Common myeloid progenitor, CD34-positive (primary cell): ENCODE measurements at regions of chr11 and their contacts with region 1.

Region 1: GRCh38 chr11:36564376-36565030 is 3.3 kb upstream of the RAG1 start:
- DNase-seq: peak; percentile 69 to 83 (median 78)
- H3K4me3 ChIP-seq: peak overlapping the region in 6 of 7 experiments; percentile 40 to 76 (median 56)
- H3K27ac ChIP-seq: no peak overlapping the region
- H3K4me1 ChIP-seq: peaks cover 0 to 11% (median 7%) of the 10 kb centered on the region in 4 experiments
- H3K27me3 ChIP-seq: no peaks in the 10 kb centered on the region

Region 2: GRCh38 chr11:36041988-36042611 is 522.4 kb before region 1 on chr11:
- CTCF ChIA-PET with region 1: no interaction called
- POLR2A ChIA-PET with region 1: no interaction called
- DNase-seq: peak; percentile 29 to 74 (median 65)
- H3K4me3 ChIP-seq: no peak overlapping the region
- H3K27ac ChIP-seq: no peak overlapping the region
- H3K4me1 ChIP-seq: peaks cover 0 to 18% (median 9%) of the 10 kb centered on the region in 4 experiments
- H3K27me3 ChIP-seq: peaks cover 0 to 2% (median 0%) of the 10 kb centered on the region in 5 experiments

Region 3: GRCh38 chr11:36577859-36578258 is 13.4 kb after region 1 on chr11:
- CTCF ChIA-PET with region 1: interaction called, 50 read pairs
- POLR2A ChIA-PET with region 1: no interaction called
- DNase-seq: no peak
- H3K4me3 ChIP-seq: no peak overlapping the region
- H3K27ac ChIP-seq: no peak overlapping the region
- H3K4me1 ChIP-seq: no peaks in the 10 kb centered on the region
- H3K27me3 ChIP-seq: no peaks in the 10 kb centered on the region

Region 4: GRCh38 chr11:36586543-36586942 is 22.0 kb after region 1 on chr11:
- CTCF ChIA-PET with region 1: interaction called, 12 read pairs
- POLR2A ChIA-PET with region 1: no interaction called
- DNase-seq: peak; percentile 31 to 81 (median 74)
- H3K4me3 ChIP-seq: no peak overlapping the region
- H3K27ac ChIP-seq: no peak overlapping the region
- H3K4me1 ChIP-seq: no peaks in the 10 kb centered on the region
- H3K27me3 ChIP-seq: peaks cover 0 to 15% (median 3%) of the 10 kb centered on the region in 5 experiments

Region 5: DNA sequence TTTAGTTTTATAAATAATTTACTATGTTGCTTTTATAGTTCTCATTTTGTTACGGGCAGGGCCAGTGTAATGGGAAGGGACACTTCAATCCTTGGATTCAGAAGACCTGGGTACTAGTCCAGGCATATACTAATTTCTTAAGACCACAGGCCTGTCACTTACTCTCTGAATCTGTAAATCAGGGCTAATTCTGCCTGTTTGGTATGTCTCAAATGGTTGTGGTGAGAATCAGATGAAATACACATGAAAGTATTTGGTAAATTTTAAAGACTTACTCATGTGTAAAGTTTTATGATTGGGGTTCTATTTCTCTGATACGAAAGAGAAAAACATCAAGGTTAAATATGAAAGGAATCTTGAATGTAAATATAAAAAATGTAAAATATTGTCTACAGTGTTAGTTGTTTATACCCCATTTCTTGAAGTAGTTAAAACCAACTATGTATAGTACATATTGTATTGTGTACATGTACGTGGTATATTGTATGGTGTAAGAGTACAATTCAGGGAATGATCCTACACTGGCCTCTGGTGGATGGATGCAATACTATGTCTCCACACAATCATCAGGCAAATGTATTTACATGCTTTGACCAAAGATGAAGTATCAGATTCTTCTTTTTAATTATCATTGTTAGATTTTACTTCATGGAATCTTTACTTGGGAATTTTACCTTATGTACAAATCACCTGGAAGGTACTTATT is 58.1 kb after region 1 on chr11:
- CTCF ChIA-PET with region 1: interaction called, 89 read pairs
- POLR2A ChIA-PET with region 1: interaction called, 3 read pairs
- DNase-seq: peak; percentile 71 to 86 (median 82)
- H3K4me3 ChIP-seq: no peak overlapping the region
- H3K27ac ChIP-seq: no peak overlapping the region
- H3K4me1 ChIP-seq: peaks cover 9 to 32% (median 17%) of the 10 kb centered on the region in 4 experiments
- H3K27me3 ChIP-seq: no peaks in the 10 kb centered on the region

Region 6: GRCh38 chr11:36628765-36629244 is 64.3 kb after region 1 on chr11:
- CTCF ChIA-PET with region 1: interaction called, 89 read pairs
- POLR2A ChIA-PET with region 1: no interaction called
- DNase-seq: no peak
- H3K4me3 ChIP-seq: no peak overlapping the region
- H3K27ac ChIP-seq: no peak overlapping the region
- H3K4me1 ChIP-seq: peaks cover 0 to 7% (median 0%) of the 10 kb centered on the region in 4 experiments
- H3K27me3 ChIP-seq: no peaks in the 10 kb centered on the region

Region 7: DNA sequence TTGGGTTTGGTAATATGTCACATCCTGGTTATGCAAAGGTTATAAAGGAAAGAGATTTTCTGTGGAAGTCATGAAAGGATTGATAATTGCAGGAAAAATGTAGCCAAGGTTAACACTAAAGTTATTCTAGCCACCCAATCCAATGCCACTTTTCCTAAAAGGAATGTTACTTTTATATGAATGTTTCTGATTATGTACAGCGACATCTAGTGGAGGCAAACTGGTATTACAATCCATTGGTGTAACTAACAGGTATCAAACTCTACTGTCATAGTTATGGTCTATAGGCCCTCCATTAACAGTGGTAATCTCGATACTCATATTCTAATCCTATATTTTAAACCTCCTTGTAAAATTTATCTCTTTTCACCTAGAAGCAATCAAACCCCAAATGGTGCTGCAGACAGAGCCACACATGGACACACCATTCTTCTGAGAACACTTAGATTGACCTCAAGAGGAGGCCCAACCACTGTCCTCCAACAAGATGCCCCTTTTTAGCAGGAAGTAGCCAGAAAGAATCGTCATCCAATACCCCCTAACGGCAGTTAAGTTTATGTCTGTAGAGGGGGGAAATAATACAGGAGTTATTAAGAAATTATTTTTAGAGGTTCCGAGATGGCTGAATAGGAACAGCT is 108.4 kb after region 1 on chr11:
- CTCF ChIA-PET with region 1: interaction called, 10 read pairs
- POLR2A ChIA-PET with region 1: no interaction called
- DNase-seq: peak; percentile 25 to 53 (median 51)
- H3K4me3 ChIP-seq: no peak overlapping the region
- H3K27ac ChIP-seq: no peak overlapping the region
- H3K4me1 ChIP-seq: no peaks in the 10 kb centered on the region
- H3K27me3 ChIP-seq: no peaks in the 10 kb centered on the region

Region 8: DNA sequence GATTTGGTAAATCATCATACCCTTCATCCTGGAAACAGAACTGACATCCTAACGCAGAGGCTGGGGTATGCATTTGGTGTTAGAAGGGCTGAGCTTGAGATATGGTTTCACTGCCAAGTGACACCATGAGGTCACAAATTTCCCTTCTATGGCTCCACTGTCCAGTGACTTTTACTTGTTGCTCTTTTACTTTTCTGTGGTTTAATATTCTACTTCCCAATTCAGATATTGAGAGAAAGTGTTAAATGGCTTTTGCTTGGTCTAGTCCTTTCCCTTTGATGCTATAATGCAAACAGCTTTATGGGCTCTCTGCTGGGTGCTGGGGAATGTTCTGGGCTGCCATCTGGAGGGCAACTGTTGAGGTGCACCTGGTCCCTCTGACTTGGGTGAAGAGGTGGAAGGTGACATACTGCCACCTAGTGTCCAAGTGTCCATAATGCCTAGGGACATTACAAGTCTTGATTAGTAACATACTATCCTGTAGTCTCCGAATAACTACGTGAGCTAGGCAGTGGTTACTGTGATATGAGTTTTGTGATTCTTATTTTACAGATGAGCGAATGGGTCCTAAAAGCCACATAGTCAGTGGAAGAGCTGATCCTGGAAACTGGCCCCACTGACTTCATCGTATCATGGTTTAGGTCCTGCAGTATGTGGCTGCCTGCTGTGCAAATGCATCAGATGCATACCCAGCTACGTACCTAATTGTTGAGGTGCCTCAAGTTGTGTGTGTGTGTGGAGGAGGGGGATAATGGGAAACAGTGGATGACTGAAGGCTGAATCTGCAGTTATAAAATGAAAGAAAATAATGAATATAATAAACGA is 182.6 kb after region 1 on chr11:
- CTCF ChIA-PET with region 1: interaction called, 59 read pairs
- POLR2A ChIA-PET with region 1: no interaction called
- DNase-seq: peak; percentile 93 to 97 (median 94)
- H3K4me3 ChIP-seq: no peak overlapping the region
- H3K27ac ChIP-seq: no peak overlapping the region
- H3K4me1 ChIP-seq: peaks cover 0 to 9% (median 5%) of the 10 kb centered on the region in 4 experiments
- H3K27me3 ChIP-seq: peaks cover 0 to 3% (median 0%) of the 10 kb centered on the region in 5 experiments